Psoas muscle (tissue), 8 donors: ENCODE measurements at regions of chr18 and their contacts with region 1.

Region 1: GRCh38 chr18:6729247-6730091 is at the start of gene ARHGAP28:
- DNase-seq: peak; percentile 81 to 93
- ATAC-seq: peak; percentile 87 to 91 (median 88)
- H3K4me3 ChIP-seq: peak within 1 kb of the TSS; percentile 81
- H3K27ac ChIP-seq: peak within 1 kb of the TSS; percentile 90
- H3K4me1 ChIP-seq: peaks cover 24% of the 10 kb centered on the region
- H3K27me3 ChIP-seq: no peaks in the 10 kb centered on the region
- CTCF ChIP-seq: peak; percentile 28
- total RNA-seq, gene ARHGAP28: 2.1 to 8.8 (median 6.4) TPM

Region 2: DNA sequence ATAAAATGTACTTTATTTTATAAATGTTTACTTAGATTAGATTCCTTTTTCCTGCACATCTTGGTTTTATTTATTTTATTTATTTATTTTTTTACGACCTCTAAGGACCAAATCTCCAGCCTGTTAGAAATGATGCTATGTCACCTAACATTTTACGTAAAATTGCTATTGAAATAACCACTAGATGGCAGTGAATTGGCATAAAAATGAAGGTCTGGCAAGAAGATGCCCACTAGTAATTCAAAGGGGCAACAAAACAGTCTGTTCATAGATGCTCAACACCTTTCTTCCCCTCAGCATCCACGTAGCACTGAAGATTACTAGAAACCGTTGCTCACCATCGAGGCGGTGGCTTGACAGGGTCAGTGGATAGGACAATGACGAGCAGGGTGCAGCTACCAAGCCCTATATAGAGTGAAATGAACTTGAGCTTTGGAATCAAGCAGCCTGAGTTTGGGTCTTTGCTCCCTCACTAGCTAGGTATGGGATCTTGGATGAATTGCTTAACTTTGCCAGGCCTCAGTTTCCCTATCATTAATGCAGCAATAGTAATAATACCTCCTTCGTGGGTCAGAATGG is 186.1 kb before region 1 on chr18:
- intact Hi-C with region 1: loop called (anchors 5 to 10 kb)
- DNase-seq: no peak
- ATAC-seq: peak in 2 of 4 donors; percentile 32 to 67
- H3K4me3 ChIP-seq: no peak overlapping the region
- H3K27ac ChIP-seq: no peak overlapping the region
- H3K4me1 ChIP-seq: peaks cover 9% of the 10 kb centered on the region
- H3K27me3 ChIP-seq: no peaks in the 10 kb centered on the region
- CTCF ChIP-seq: peak; percentile 66

Region 3: GRCh38 chr18:6659963-6660725 is 69.3 kb before region 1 on chr18:
- intact Hi-C with region 1: loop called in 1 of 2 experiments (anchors 5 kb)
- DNase-seq: no peak
- ATAC-seq: peak; percentile 49 to 97 (median 93)
- H3K4me3 ChIP-seq: peak overlapping the region; percentile 22
- H3K27ac ChIP-seq: peak overlapping the region; percentile 12
- H3K4me1 ChIP-seq: peaks cover 5% of the 10 kb centered on the region
- H3K27me3 ChIP-seq: no peaks in the 10 kb centered on the region
- CTCF ChIP-seq: no peak

Region 4: DNA sequence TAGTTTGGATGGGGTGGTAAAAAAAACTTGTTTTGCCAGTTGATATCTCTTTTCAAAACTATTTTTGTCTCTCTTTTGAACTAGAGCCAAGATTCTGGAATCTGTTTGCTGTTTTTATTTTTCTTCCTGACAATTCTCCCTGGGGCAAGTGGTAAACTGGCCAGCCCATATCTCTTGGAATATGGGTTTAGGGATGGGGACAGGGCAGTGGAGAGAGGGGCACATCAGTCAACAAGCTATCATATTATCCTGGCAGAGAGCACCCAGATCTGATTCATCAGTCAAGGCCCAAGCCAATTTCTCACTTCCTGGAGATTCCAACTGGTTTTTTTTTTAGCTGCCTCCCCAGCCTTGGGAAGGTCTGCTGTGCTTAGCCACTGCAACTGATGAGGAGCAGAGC is 52.3 kb after region 1 on chr18:
- intact Hi-C with region 1: loop called in 1 of 2 experiments (anchors 2 kb)
- DNase-seq: no peak
- ATAC-seq: peak; percentile 86 to 97 (median 94)
- H3K4me3 ChIP-seq: no peak overlapping the region
- H3K27ac ChIP-seq: peak overlapping the region; percentile 77
- H3K4me1 ChIP-seq: peaks cover 14% of the 10 kb centered on the region
- H3K27me3 ChIP-seq: no peaks in the 10 kb centered on the region
- CTCF ChIP-seq: no peak

Region 5: GRCh38 chr18:6878556-6879297 is 149.3 kb after region 1 on chr18:
- intact Hi-C with region 1: loop called in 1 of 2 experiments (anchors 10 kb)
- DNase-seq: no peak
- ATAC-seq: no peak
- H3K4me3 ChIP-seq: no peak overlapping the region
- H3K27ac ChIP-seq: no peak overlapping the region
- H3K4me1 ChIP-seq: peaks cover 6% of the 10 kb centered on the region
- H3K27me3 ChIP-seq: no peaks in the 10 kb centered on the region
- CTCF ChIP-seq: no peak

Region 6: DNA sequence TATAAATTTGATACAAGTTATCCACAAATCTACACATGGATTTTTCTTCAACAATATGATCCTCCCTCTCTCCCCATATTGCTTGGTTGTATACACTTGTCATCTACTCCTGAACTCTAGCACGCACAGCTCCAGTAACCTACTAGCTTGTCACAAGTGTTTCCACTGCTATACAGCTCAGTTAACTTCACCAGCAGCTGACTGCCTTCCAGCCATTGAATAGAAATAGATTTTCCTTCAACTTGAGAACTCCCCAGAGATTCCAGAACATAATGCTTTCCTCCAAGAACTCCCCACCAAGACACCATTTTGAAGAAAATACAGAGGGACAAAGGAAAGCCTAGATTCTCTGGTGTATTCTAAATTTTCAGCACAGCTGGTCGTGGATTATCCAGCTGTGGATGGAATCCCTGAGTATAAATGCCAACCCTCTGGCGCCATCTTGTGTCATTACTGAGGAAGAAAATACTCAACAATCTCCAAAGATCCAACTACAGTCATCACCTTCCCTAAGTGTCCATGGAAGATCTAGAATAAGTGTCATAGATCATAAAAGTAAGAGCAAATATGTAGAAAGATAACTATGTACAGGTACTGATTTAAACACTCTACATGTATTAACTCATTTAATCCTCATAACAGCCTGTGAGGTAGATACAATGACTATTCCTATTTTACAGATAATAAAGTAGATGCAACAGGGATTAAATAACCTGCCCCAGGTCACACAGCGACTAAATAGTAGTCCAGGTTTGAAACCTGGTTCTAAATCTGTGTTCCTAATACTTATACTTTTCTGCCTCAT is 156.7 kb after region 1 on chr18:
- intact Hi-C with region 1: loop called in 1 of 2 experiments (anchors 5 kb)
- DNase-seq: no peak
- ATAC-seq: peak; percentile 36 to 86 (median 69)
- H3K4me3 ChIP-seq: no peak overlapping the region
- H3K27ac ChIP-seq: no peak overlapping the region
- H3K4me1 ChIP-seq: peaks cover under 1% of the 10 kb centered on the region
- H3K27me3 ChIP-seq: no peaks in the 10 kb centered on the region
- CTCF ChIP-seq: peak; percentile 74